ENCODE measurements at regions of chr16 and their contacts with region 1.

Region 1: GRCh38 chr16:77807-78443 is at the start of gene MPG:
- DNase-seq: peak; percentile 91 to 99 (median 99)
- ATAC-seq: peak; percentile 80
- H3K4me3 ChIP-seq: peak within 1 kb of the TSS; percentile 93
- H3K27ac ChIP-seq: peak within 1 kb of the TSS; percentile 89
- H3K4me1 ChIP-seq: peaks cover 29 to 72% of the 10 kb centered on the region in 2 experiments
- H3K27me3 ChIP-seq: no peaks in the 10 kb centered on the region
- CTCF ChIP-seq: no peak
- EP300 ChIP-seq: no peak
- POLR2A ChIP-seq: peak; percentile 64
- RAD21 ChIP-seq: no peak
- polyA plus RNA-seq, gene MPG: 0.42 to 2.2 TPM

Region 2: GRCh38 chr16:91484-91883 is 13.6 kb after region 1 on chr16:
- CTCF ChIA-PET with region 1: interaction called, 9 read pairs
- POLR2A ChIA-PET with region 1: interaction called, 11 read pairs
- in situ Hi-C with region 1: no loop called
- intact Hi-C with region 1: no loop called
- DNase-seq: no peak
- ATAC-seq: peak; percentile 22; the same call in 2 of the 3 replicates
- H3K4me3 ChIP-seq: no peak overlapping the region
- H3K27ac ChIP-seq: no peak overlapping the region
- H3K4me1 ChIP-seq: peaks cover 14 to 51% of the 10 kb centered on the region in 2 experiments; a peak in 4 of 5 replicates
- H3K27me3 ChIP-seq: no peaks in the 10 kb centered on the region
- CTCF ChIP-seq: no peak
- EP300 ChIP-seq: no peak
- POLR2A ChIP-seq: no peak
- RAD21 ChIP-seq: no peak

Region 3: DNA sequence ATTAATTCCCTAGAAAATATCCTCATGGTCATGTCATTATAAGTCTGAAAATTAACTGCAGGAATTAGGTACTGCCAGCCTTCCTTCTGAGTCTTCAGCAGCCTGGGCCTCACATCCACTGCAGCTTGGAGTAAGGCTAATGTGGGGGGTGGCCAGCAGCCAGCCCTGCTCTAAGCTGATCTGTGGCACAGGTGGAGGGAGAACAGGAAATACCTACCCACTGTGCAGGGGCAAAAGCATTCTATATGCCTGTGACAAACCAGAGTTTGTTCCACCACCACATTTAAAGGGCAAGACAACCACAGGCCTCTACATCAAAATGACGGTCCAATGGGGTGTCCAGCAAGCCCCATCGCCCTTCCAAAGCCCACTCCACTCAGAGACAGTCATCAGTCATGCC is 51.1 kb after region 1 on chr16:
- CTCF ChIA-PET with region 1: no interaction called
- POLR2A ChIA-PET with region 1: no interaction called
- in situ Hi-C with region 1: no loop called
- intact Hi-C with region 1: no loop called
- DNase-seq: no peak
- ATAC-seq: no peak
- H3K4me3 ChIP-seq: no peak overlapping the region
- H3K27ac ChIP-seq: no peak overlapping the region
- H3K4me1 ChIP-seq: peaks cover 33 to 35% of the 10 kb centered on the region in 2 experiments; a peak in 4 of 5 replicates
- H3K27me3 ChIP-seq: no peaks in the 10 kb centered on the region
- CTCF ChIP-seq: no peak
- EP300 ChIP-seq: no peak
- POLR2A ChIP-seq: no peak
- RAD21 ChIP-seq: no peak

Region 4: DNA sequence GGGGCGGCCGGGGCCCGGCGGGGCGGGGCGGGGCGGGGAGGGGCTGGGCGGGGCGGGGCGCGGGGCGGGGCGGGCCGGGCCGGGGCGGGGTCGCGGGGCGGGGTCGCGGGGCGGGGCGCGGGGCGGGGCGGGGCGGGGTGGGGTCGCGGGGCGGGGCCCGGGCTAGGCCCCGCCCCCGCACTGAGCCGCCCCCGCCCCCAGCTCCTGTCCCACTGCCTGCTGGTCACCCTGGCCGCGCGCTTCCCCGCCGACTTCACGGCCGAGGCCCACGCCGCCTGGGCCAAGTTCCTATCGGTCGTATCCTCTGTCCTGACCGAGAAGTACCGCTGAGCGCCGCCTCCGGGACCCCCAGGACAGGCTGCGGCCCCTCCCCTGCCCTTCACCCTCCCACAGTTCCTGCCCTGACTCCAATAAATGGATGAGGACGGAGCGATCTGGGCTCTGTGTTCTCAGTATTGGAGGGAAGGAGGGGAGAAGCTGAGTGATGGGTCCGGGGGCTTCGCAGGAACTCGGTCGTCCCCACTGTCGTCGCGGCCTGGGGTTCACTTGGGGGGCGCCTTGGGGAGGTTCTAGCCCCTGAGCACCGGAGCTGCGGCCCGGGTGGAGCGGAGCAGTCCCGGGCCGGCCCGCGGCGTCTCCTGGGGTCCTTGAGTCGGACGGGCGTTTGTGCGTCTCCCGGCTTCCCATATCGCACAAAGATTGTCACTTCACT is 87.1 kb after region 1 on chr16:
- CTCF ChIA-PET with region 1: no interaction called
- POLR2A ChIA-PET with region 1: no interaction called
- in situ Hi-C with region 1: no loop called
- intact Hi-C with region 1: no loop called
- DNase-seq: peak; percentile 38 to 91 (median 84)
- ATAC-seq: peak; percentile 81
- H3K4me3 ChIP-seq: peak overlapping the region; percentile 35
- H3K27ac ChIP-seq: peak overlapping the region; percentile 66; the same call in 2 of the 3 replicates
- H3K4me1 ChIP-seq: peaks cover 10 to 72% of the 10 kb centered on the region in 2 experiments; a peak in 4 of 5 replicates
- H3K27me3 ChIP-seq: no peaks in the 10 kb centered on the region
- CTCF ChIP-seq: no peak
- EP300 ChIP-seq: no peak
- POLR2A ChIP-seq: 0 out of 2 replicates have a peak, but pooled peaks have one; percentile 36
- RAD21 ChIP-seq: no peak

Region 5: GRCh38 chr16:912684-913613 is 835.0 kb after region 1 on chr16:
- CTCF ChIA-PET with region 1: no interaction called
- POLR2A ChIA-PET with region 1: no interaction called
- in situ Hi-C with region 1: no loop called
- intact Hi-C with region 1: no loop called
- DNase-seq: no peak
- ATAC-seq: no peak
- H3K4me3 ChIP-seq: no peak overlapping the region
- H3K27ac ChIP-seq: no peak overlapping the region
- H3K4me1 ChIP-seq: peaks cover 0 to 23% of the 10 kb centered on the region in 2 experiments; a peak in 1 of 5 replicates
- H3K27me3 ChIP-seq: peaks cover 26 to 92% of the 10 kb centered on the region in 2 experiments; a peak in 4 of 5 replicates
- CTCF ChIP-seq: no peak
- EP300 ChIP-seq: no peak
- POLR2A ChIP-seq: no peak
- RAD21 ChIP-seq: no peak